Mammary epithelial cell (primary cell): ENCODE measurements at regions of chr2 and their contacts with region 1.

Region 1: GRCh38 chr2:28958689-28959088 is 22.4 kb upstream of the TOGARAM2 start:
- DNase-seq: peak; percentile 71
- H3K4me3 ChIP-seq: no peak overlapping the region
- H3K27ac ChIP-seq: no peak overlapping the region
- H3K4me1 ChIP-seq: no peaks in the 10 kb centered on the region
- H3K27me3 ChIP-seq: no peaks in the 10 kb centered on the region
- CTCF ChIP-seq: peak; percentile 49 to 58

Region 2: GRCh38 chr2:28821295-28821958 is 137.3 kb before region 1 on chr2:
- CTCF ChIA-PET with region 1: no interaction called
- dilution Hi-C with region 1: no loop called
- in situ Hi-C with region 1: no loop called
- intact Hi-C with region 1: loop called (anchors 1 kb)
- DNase-seq: peak; percentile 64
- H3K4me3 ChIP-seq: no peak overlapping the region
- H3K27ac ChIP-seq: no peak overlapping the region
- H3K4me1 ChIP-seq: no peaks in the 10 kb centered on the region
- H3K27me3 ChIP-seq: no peaks in the 10 kb centered on the region
- CTCF ChIP-seq: peak; percentile 46 to 67

Region 3: DNA sequence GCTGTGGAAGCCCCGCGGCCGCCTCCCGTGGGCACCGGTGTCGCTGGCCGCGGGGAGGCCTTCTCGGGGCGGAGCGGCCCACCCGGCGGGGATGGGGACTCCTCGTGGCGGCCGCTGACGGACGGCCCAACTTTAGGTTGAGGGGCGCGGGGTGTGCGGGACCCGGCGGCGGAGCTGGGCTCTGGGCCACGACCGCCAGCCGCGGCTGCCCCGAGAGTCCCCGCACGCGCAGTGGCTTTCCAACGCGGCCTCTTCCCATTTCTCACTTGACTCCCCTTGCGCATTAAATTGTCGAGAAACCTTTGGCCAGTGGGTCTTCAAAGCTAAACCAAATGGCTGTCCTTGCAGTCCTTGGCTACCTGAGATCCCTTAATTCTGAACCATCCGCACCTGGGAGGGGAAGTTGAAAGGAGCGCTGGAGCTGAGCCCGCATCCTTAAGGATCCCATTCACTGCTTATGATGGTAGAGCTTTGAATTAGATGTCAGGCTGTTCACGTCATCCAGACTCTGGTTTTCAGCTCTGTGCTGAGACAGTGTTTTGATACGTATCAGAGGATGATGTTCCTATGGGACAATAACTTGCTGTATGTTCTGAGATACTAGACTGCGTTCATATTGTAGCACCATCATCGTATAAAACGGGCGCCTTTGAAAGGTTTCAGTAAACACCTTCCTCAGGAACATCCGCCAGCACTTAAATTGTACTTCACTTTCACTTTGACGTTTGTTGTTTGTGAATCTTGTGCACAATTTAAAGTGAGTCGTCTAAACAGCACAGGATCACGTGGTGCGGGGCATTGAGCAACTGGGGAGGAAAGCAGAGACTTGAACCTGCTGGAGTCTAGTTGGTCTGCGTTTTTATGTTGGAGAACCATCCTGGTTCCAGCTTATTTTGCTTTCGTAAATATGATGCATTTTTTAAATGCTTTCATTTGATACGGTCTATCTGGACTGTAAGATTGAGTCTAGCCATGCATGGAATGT is 157.4 kb after region 1 on chr2:
- CTCF ChIA-PET with region 1: no interaction called
- dilution Hi-C with region 1: no loop called
- in situ Hi-C with region 1: no loop called
- intact Hi-C with region 1: loop called (anchors 5 kb)
- DNase-seq: peak; percentile 85
- H3K4me3 ChIP-seq: peak overlapping the region; percentile 53 to 80 (median 56)
- H3K27ac ChIP-seq: peak overlapping the region; percentile 99
- H3K4me1 ChIP-seq: peaks cover 64% of the 10 kb centered on the region
- H3K27me3 ChIP-seq: no peaks in the 10 kb centered on the region
- CTCF ChIP-seq: no peak

Region 4: GRCh38 chr2:29196792-29197788 is 238.4 kb after region 1 on chr2:
- CTCF ChIA-PET with region 1: no interaction called
- dilution Hi-C with region 1: no loop called
- in situ Hi-C with region 1: loop called in 1 of 2 experiments (anchors 10 kb)
- intact Hi-C with region 1: loop called (anchors 1 kb)
- DNase-seq: peak; percentile 49
- H3K4me3 ChIP-seq: no peak overlapping the region
- H3K27ac ChIP-seq: no peak overlapping the region
- H3K4me1 ChIP-seq: no peaks in the 10 kb centered on the region
- H3K27me3 ChIP-seq: no peaks in the 10 kb centered on the region
- CTCF ChIP-seq: peak; percentile 78 to 85

Region 5: GRCh38 chr2:29841386-29842004 is 882.8 kb after region 1 on chr2:
- CTCF ChIA-PET with region 1: no interaction called
- dilution Hi-C with region 1: no loop called
- in situ Hi-C with region 1: loop called in 1 of 2 experiments (anchors 25 kb)
- intact Hi-C with region 1: loop called (anchors 2 kb)
- DNase-seq: no peak
- H3K4me3 ChIP-seq: no peak overlapping the region
- H3K27ac ChIP-seq: no peak overlapping the region
- H3K4me1 ChIP-seq: no peaks in the 10 kb centered on the region
- H3K27me3 ChIP-seq: peaks cover 6% of the 10 kb centered on the region
- CTCF ChIP-seq: peak; percentile 96 to 98

Region 6: DNA sequence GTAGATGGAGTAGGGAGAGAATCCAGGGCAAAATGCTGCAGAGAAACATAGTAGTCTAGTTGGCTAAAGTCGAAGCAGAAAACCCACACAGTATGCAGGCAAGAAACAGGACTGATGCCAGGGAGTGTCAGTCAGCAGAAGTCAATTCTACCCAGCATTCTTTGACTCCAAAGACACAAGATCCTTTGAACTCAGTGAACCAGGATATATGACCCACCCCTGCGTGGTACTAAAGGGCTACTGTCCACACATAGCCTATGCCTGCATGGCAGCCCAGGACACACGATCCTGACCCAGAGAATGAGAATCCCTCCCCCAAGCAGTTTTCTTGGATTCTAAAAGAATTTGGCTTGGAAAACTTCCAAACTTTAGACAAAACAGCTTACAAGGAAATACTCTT is 920.2 kb after region 1 on chr2:
- CTCF ChIA-PET with region 1: no interaction called
- dilution Hi-C with region 1: no loop called
- in situ Hi-C with region 1: no loop called
- intact Hi-C with region 1: no loop called
- DNase-seq: peak; percentile 51
- H3K4me3 ChIP-seq: no peak overlapping the region
- H3K27ac ChIP-seq: no peak overlapping the region
- H3K4me1 ChIP-seq: peaks cover 11% of the 10 kb centered on the region
- H3K27me3 ChIP-seq: no peaks in the 10 kb centered on the region
- CTCF ChIP-seq: no peak

Region 7: GRCh38 chr2:30072250-30072842 is 1113.7 kb after region 1 on chr2:
- CTCF ChIA-PET with region 1: no interaction called
- dilution Hi-C with region 1: no loop called
- in situ Hi-C with region 1: loop called in 1 of 2 experiments (anchors 25 kb)
- intact Hi-C with region 1: no loop called
- DNase-seq: peak; percentile 55
- H3K4me3 ChIP-seq: no peak overlapping the region
- H3K27ac ChIP-seq: no peak overlapping the region
- H3K4me1 ChIP-seq: no peaks in the 10 kb centered on the region
- H3K27me3 ChIP-seq: no peaks in the 10 kb centered on the region
- CTCF ChIP-seq: peak; percentile 82 to 92